Naive thymus-derived CD8-positive, alpha-beta T cell (primary cell): ENCODE measurements at regions of chr22 and their contacts with region 1.

Region 1: DNA sequence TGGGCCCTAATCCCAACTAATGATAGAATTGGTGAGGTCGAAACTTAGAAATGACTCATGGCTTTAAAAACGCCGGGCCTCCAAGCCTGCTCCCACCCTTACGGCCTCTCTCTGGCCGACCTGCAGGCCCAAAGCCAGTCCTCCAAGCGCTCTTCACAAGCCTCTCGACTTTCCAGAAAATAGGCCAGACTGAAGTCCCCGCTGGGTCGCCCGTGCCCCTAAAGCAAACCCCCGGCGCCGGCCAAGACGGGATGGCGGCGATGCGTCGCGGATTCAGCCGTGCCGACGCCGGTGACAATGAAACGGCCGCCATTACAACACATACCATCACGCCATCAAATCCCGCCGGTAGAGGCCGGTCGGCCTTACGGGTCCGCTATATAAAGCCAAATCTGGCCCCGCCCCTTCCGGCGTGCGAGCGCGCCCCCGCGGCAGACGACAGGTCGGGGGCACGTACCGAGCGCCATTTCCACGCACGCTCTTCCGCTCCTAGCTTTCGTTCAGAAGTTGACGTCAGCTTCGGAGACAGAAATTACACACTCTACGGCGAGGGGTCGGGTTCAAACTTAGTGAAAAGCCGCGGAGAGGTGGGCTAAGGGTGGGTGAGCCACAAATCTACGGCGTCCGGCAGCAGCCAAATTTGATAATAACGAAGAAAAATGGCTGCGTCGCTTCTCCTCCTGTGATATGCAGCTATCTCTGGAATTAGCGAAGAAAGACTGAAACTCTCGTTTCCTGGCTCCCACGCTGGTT is at the start of gene RPL3:
- DNase-seq: peak; percentile 94 to 98 (median 97)
- ATAC-seq: peak; percentile 79 to 85
- H3K4me3 Mint-ChIP-seq: peak within 1 kb of the TSS; percentile 99 to 100 (median 100)
- H3K27ac Mint-ChIP-seq: peak within 1 kb of the TSS; percentile 96 to 100 (median 99)
- H3K4me1 Mint-ChIP-seq: peaks cover 25 to 58% (median 52%) of the 10 kb centered on the region in 4 donors
- H3K27me3 Mint-ChIP-seq: peaks cover 0 to 5% (median 0%) of the 10 kb centered on the region in 5 donors
- polyA plus RNA-seq, gene RPL3: 4,219 to 5,383 (median 4,759) TPM

Region 2: GRCh38 chr22:38872172-38872830 is 447.1 kb before region 1 on chr22 and contains the start of gene CBX6:
- POLR2A ChIA-PET with region 1: interaction called, 29 read pairs
- DNase-seq: peak; percentile 88 to 96 (median 96)
- ATAC-seq: peak; percentile 79 to 81
- H3K4me3 Mint-ChIP-seq: peak within 1 kb of the TSS; percentile 89 to 97 (median 93)
- H3K27ac Mint-ChIP-seq: peak within 1 kb of the TSS; percentile 79 to 96 (median 92)
- H3K4me1 Mint-ChIP-seq: peaks cover 26 to 56% (median 53%) of the 10 kb centered on the region in 4 donors
- H3K27me3 Mint-ChIP-seq: peaks cover 0 to 9% (median 0%) of the 10 kb centered on the region in 5 donors
- polyA plus RNA-seq, gene CBX6: 5.8 to 6.5 (median 6.4) TPM

Region 3: DNA sequence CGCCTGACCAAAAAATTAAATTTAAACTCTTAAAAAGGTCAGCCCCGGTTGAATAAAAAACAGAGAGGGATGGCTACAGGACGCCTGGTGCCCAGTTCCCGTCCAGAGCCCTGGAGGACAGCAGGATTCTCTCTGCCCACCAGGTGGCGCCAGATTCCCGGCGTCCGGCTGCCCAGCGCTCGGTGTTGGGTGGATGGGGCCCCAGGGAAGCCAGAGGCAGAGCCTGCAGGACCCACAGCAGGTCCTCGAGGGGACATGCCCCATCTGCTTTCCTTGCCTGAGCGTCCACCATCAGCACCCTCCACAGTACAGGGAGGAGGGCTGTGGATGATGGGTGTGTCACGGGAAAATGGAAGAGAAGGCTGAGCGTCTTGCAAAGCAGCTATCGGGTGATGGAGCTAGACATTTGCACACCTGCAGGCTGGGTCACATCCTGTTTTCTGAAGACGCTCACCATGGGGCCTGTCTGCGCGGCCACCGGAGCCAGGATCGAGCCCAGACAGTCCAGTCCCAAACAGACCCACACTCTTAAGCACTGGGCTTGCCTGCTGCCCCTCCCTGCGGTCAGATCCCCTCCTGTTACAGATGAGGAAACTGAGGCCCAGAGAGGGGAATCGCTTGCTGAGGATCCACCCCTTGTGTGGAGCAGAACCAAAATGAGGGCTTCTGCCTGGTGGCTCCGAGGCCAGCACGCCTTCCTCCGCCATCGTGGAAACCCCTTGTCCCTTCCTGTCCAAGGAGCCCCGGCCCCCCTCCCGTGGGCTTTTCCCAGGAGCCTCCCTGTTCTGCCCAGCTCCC is 148.4 kb before region 1 on chr22:
- POLR2A ChIA-PET with region 1: interaction called, 231 read pairs
- DNase-seq: peak; percentile 64 to 92 (median 84)
- ATAC-seq: peak; percentile 66 to 68
- H3K4me3 Mint-ChIP-seq: peak overlapping the region; percentile 53 to 83 (median 76)
- H3K27ac Mint-ChIP-seq: peak overlapping the region; percentile 91 to 99 (median 96)
- H3K4me1 Mint-ChIP-seq: peaks cover 33 to 50% (median 47%) of the 10 kb centered on the region in 4 donors
- H3K27me3 Mint-ChIP-seq: no peaks in the 10 kb centered on the region

Region 4: DNA sequence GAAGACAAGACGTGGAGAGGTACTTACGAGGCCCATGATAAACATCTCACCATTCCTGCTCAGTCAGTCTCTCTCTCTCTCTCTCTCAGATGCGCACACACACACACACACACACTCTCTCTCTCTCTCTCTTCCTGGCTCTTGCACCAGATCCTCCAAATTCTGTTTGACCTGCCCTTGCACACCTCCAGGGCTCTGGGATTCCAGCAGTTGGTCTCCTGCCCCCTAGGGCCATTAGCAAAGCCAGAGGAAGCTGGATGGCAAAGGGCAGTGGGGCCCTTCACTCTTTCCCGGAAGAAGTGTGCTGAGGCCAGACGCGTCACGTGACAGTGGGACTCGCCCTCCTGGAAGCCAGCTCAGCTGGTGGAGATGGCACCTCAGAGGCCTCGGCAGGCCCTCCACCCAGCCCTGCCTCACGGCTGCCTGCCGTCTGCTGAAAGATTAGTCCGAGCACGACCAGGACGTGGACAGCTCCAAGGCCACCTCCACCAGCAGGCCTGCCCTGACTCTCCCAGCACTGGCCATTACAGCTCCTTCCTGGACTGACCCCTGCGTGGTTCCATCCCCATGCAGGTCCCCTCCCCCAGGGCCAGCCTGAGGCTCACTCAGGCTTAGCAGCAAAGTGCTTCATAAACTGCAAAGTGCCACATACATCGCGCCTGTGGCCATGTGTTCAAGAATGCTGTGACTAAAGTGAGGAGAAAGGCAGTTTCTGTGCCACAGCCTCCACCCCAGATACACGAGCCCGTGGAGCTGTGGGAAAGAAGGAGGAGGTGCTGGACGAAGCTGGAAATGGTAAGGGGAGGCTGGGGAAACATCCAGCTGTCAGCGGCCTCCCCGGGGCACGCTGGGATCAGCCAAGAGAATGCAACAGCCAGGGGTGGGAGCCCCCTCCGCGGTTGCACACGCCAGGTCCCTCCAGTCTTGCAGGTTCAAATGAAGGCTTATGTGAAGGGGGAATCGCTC is 78.3 kb before region 1 on chr22:
- POLR2A ChIA-PET with region 1: interaction called, 77 read pairs
- DNase-seq: peak in 8 of 10 donors; percentile 25 to 73 (median 35)
- ATAC-seq: peak; percentile 16 to 18
- H3K4me3 Mint-ChIP-seq: peak overlapping the region; percentile 82 to 93 (median 92)
- H3K27ac Mint-ChIP-seq: peak overlapping the region; percentile 88 to 97 (median 92)
- H3K4me1 Mint-ChIP-seq: peaks cover 44 to 78% (median 67%) of the 10 kb centered on the region in 4 donors
- H3K27me3 Mint-ChIP-seq: peaks cover 0 to 20% (median 11%) of the 10 kb centered on the region in 5 donors

Region 5: GRCh38 chr22:39293422-39294257 is 25.8 kb before region 1 on chr22:
- POLR2A ChIA-PET with region 1: no interaction called
- DNase-seq: no peak
- ATAC-seq: no peak
- H3K4me3 Mint-ChIP-seq: no peak overlapping the region
- H3K27ac Mint-ChIP-seq: peak overlapping the region in 1 of 10 donors; percentile 31
- H3K4me1 Mint-ChIP-seq: peaks cover 0 to 3% (median 1%) of the 10 kb centered on the region in 4 donors
- H3K27me3 Mint-ChIP-seq: peaks cover 5 to 20% (median 12%) of the 10 kb centered on the region in 5 donors

Region 6: GRCh38 chr22:39349506-39349966 is 30.1 kb after region 1 on chr22:
- POLR2A ChIA-PET with region 1: interaction called, 70 read pairs
- DNase-seq: peak; percentile 17 to 73 (median 49)
- ATAC-seq: peak; percentile 50 to 61
- H3K4me3 Mint-ChIP-seq: peak overlapping the region; percentile 84 to 94 (median 90)
- H3K27ac Mint-ChIP-seq: peak overlapping the region; percentile 59 to 95 (median 89)
- H3K4me1 Mint-ChIP-seq: peaks cover 7 to 40% (median 26%) of the 10 kb centered on the region in 4 donors
- H3K27me3 Mint-ChIP-seq: peaks cover 0 to 3% (median 2%) of the 10 kb centered on the region in 5 donors

Region 7: GRCh38 chr22:39520054-39520891 is 200.8 kb after region 1 on chr22 and contains the start of gene ATF4:
- POLR2A ChIA-PET with region 1: interaction called, 58 read pairs
- DNase-seq: peak; percentile 89 to 99 (median 96)
- ATAC-seq: peak; percentile 92 to 95
- H3K4me3 Mint-ChIP-seq: peak within 1 kb of the TSS; percentile 87 to 100 (median 98)
- H3K27ac Mint-ChIP-seq: peak within 1 kb of the TSS; percentile 91 to 100 (median 99)
- H3K4me1 Mint-ChIP-seq: peaks cover 18 to 61% (median 49%) of the 10 kb centered on the region in 4 donors
- H3K27me3 Mint-ChIP-seq: peaks cover 0 to 4% (median 0%) of the 10 kb centered on the region in 5 donors
- polyA plus RNA-seq, gene ATF4: 51.9 to 122 (median 61.0) TPM

Region 8: DNA sequence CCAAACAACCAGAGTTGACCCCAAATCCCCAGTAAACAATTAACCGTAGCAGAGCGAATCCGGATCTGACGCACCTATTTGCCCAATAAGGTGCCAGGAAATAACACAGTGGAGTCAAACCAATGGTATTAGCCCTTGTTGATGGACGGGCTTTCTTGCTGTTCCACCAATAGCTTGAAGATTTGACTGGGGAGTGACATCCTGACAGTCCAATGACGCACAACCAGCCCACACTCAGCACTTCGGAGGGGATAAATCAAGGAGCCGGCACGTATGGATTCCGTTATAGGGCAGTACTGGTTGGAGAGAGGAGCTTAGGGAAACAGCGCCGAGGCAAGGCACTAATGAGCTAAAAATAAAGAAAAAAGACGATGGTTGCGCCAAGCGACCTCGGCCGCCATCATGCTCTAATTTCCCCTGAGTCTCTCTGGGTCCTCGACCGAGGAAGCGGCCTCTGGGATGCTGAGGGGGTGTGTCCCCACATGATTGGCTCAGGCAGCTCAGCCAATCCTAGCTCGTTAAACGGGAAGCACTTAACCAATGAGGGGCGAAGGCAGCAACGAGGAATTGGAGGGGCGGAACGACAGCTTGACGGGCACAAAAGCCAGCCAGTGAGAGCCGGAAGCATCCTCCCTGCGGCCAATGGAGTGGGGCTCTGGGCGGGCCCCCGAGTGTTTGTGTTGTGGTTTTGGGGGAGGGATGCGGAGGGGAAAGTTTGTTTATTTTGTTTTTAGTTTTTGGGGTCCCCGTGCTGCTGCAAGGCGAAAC is 724.8 kb after region 1 on chr22:
- POLR2A ChIA-PET with region 1: interaction called, 13 read pairs
- DNase-seq: peak; percentile 91 to 100 (median 99)
- ATAC-seq: peak; percentile 86 to 87
- H3K4me3 Mint-ChIP-seq: peak overlapping the region; percentile 93 to 100 (median 96)
- H3K27ac Mint-ChIP-seq: peak overlapping the region; percentile 97 to 100 (median 100)
- H3K4me1 Mint-ChIP-seq: peaks cover 19 to 49% (median 43%) of the 10 kb centered on the region in 4 donors
- H3K27me3 Mint-ChIP-seq: peaks cover 6 to 8% (median 7%) of the 10 kb centered on the region in 5 donors